ENCODE measurements at regions of chr19 and their contacts with region 1.

Region 1: DNA sequence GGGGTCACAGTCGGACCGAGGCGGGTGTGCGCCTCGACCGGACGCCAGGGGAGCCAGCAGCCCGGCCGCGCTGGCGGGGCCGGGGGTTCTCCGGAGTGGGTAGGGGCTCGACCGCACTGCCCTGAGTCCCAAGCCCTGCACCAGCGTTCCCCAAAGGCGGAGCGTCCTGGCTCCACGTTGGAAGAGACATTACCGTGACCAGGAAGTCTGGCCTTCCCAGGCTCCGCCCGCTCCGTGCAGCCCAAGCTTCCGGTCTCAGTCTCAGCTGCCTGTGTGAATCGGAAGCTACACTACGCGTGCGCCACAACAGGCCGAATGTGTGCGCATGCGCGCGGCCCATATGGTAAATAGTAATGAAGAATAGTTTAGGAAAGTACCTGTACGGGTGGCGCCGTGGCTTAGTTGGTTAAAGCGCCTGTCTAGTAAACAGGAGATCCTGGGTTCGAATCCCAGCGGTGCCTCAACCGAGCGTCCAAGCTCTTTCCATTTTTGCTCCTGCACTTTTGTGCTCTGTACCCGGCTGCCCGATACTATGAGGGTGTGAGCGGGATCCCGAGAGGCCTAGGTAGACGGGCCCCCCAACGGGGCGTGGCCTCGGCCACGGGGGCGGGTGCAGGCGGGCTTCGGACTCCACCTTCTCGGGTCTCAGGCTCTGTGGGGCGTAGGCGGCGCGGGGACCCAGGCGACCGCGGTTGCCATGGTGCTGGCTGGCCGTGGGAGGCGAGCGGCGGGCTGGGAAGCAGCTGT is 17.3 kb upstream of the LRP3 start:
- DNase-seq: peak; percentile 99
- ATAC-seq: peak; percentile 96
- H3K4me3 ChIP-seq: peak overlapping the region; percentile 60
- H3K27ac ChIP-seq: peak overlapping the region; percentile 69
- H3K4me1 ChIP-seq: peaks cover 10% of the 10 kb centered on the region
- H3K27me3 ChIP-seq: no peaks in the 10 kb centered on the region
- CTCF ChIP-seq: no peak; the same call in 1 of the 2 replicates
- POLR2A ChIP-seq: peak; percentile 80
- RAD21 ChIP-seq: no peak

Region 2: GRCh38 chr19:33125929-33126388 is 50.9 kb before region 1 on chr19:
- CTCF ChIA-PET with region 1: interaction called, 4 read pairs
- POLR2A ChIA-PET with region 1: no interaction called
- dilution Hi-C with region 1: no loop called
- in situ Hi-C with region 1: loop called (anchors 10 kb)
- intact Hi-C with region 1: loop called (anchors 2 kb)
- DNase-seq: peak; percentile 69
- ATAC-seq: peak; percentile 99
- H3K4me3 ChIP-seq: no peak overlapping the region
- H3K27ac ChIP-seq: no peak overlapping the region
- H3K4me1 ChIP-seq: no peaks in the 10 kb centered on the region
- H3K27me3 ChIP-seq: no peaks in the 10 kb centered on the region
- CTCF ChIP-seq: peak; percentile 83
- POLR2A ChIP-seq: no peak
- RAD21 ChIP-seq: peak; percentile 76

Region 3: GRCh38 chr19:33143897-33144405 is 32.9 kb before region 1 on chr19:
- CTCF ChIA-PET with region 1: interaction called, 8 read pairs
- POLR2A ChIA-PET with region 1: no interaction called
- dilution Hi-C with region 1: no loop called
- in situ Hi-C with region 1: loop called (anchors 10 kb)
- intact Hi-C with region 1: loop called (anchors 2 kb)
- DNase-seq: peak; percentile 42
- ATAC-seq: peak; percentile 99
- H3K4me3 ChIP-seq: no peak overlapping the region
- H3K27ac ChIP-seq: no peak overlapping the region
- H3K4me1 ChIP-seq: no peaks in the 10 kb centered on the region; the same call in 1 of the 2 replicates
- H3K27me3 ChIP-seq: peaks cover 2% of the 10 kb centered on the region; the same call in 1 of the 2 replicates
- CTCF ChIP-seq: peak; percentile 90
- POLR2A ChIP-seq: no peak
- RAD21 ChIP-seq: peak; percentile 87